Tibial artery (tissue), 4 donors: ENCODE measurements at regions of chr3 and their contacts with region 1.

Region 1: DNA sequence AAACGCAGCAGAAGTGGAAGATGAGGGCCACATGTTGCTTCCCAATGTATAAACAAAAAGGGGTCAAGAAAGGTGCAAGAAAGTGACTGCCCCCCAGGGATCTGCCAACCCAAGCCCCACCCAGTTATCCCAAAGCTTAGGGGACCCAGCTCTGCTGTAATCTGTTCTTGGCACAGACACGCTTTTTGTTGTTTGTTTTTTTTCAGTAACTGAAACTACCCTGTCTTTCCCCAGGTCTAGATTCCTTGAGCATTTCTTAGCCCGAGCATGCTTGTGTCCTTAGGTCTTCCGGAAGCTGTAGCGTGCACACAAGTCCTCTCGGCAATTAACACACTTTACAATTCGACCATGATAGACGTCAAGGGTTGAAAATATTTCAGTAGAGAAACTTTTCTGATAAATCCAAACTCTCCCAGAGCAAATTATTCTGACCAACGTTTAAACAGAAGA is 8.5 kb upstream of the PPARG start:
- DNase-seq: no peak
- H3K4me3 ChIP-seq: no peak overlapping the region
- H3K27ac ChIP-seq: no peak overlapping the region
- H3K4me1 ChIP-seq: no peaks in the 10 kb centered on the region
- H3K27me3 ChIP-seq: peaks cover 0 to 5% of the 10 kb centered on the region in 2 donors
- CTCF ChIP-seq: no peak

Region 2: GRCh38 chr3:12194669-12195161 is 85.7 kb before region 1 on chr3:
- intact Hi-C with region 1: loop called (anchors 5 kb)
- DNase-seq: no peak
- H3K4me3 ChIP-seq: no peak overlapping the region
- H3K27ac ChIP-seq: peak overlapping the region; percentile 47 to 66
- H3K4me1 ChIP-seq: peaks cover 0 to 39% (median 23%) of the 10 kb centered on the region in 4 donors
- H3K27me3 ChIP-seq: no peaks in the 10 kb centered on the region
- CTCF ChIP-seq: no peak